ENCODE measurements at regions of chr22 and their contacts with region 1.

Region 1: DNA sequence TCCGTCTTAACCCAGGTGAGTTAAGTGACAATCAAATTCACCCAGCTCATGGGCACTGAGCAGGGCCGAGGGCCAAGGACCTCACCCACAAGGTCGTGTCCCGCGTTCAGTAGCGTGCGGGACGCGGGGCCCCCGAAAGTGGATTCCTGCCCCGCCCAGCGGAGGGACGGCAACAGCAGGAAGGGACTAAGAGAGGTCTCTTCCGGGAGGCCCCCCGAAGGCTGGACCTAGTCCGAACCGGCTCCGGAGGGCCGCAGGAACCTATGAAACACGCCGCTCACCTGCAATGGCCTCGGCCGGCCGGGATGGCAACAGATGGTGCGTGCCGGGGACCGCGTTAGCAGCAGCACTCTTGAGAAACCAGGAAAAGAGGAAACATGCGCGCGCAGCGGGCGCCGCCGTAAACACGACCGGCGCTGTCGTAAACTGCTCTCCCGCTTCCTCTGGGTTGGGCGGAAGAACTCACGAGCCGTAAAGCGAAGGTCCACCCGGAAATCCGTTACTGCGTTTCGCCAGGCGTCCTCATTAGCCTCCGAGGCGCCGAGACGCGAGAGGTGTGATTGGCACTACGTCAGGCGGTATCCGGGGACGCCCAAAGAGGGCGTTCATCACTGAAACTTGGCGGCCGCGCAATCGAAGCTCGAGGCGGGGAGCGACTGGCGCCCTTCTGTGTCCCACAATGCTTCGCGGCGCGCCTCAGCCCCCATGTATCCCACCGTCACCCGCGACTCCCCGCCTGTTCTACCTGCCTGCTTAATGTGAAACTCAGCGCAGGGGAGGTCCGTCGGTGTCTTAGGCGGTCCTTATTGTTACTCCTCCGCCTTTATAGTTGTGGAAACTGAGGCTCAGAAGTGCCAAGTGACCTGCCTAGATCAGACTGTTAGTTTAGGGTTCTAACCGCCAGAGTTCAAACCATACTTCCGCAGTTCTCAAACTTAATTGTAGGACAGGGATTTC is at the start of gene EIF3D:
- DNase-seq: peak; percentile 98 to 99
- ATAC-seq: peak; percentile 93 to 94 (median 94)
- H3K4me3 ChIP-seq: peak within 1 kb of the TSS; percentile 96
- H3K27ac ChIP-seq: peak within 1 kb of the TSS; percentile 95
- H3K4me1 ChIP-seq: peaks cover 17% of the 10 kb centered on the region
- H3K27me3 ChIP-seq: no peaks in the 10 kb centered on the region
- CTCF ChIP-seq: no peak
- total RNA-seq, gene EIF3D: 102 to 125 (median 116) TPM

Region 2: DNA sequence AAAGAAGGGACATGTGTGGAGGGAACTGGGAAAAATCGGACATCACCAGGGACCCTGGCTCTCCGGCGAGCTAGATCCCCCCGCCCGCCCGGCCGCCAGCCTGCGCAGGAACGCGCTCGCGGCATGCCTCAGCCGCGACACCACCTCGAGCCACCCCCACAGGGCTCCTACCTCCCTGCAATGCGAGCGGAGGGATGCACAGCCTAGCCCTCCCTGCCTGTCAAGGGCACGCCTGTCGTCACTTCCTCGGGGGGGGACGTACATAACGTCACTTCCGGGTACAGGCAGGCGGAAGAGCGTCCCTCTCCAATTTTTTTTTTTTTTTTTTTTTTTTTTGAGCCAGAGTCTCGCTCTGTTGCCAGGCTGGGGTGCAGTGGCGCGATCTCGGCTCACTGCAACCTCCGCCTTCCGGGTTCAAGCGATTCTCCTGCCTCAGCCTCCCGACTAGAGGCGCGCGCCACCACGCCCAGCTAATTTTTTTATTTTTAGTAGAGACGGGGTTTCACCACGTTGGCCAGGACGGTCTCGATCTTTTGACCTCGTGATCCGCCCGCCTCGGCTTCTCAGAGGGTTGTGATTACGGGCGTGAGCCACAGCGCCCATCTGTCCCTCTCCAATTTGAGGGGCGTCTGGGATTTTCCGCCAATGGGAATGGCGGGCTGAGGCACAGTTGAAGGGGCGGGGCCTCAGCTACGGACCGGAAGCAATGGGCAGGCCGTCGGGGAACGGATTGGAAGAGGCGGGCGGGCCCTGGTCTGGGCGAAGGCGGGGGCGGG is 47.5 kb before region 1 on chr22 and contains the start of gene TXN2:
- intact Hi-C with region 1: loop called in 1 of 2 experiments (anchors 2 kb)
- DNase-seq: peak; percentile 98 to 99
- ATAC-seq: peak; percentile 93 to 95 (median 94)
- H3K4me3 ChIP-seq: peak within 1 kb of the TSS; percentile 92
- H3K27ac ChIP-seq: peak within 1 kb of the TSS; percentile 97
- H3K4me1 ChIP-seq: peaks cover 15% of the 10 kb centered on the region
- H3K27me3 ChIP-seq: no peaks in the 10 kb centered on the region
- CTCF ChIP-seq: no peak
- total RNA-seq, gene TXN2: 83.9 to 146 (median 112) TPM

Region 3: GRCh38 chr22:36684841-36685240 is 155.8 kb after region 1 on chr22:
- intact Hi-C with region 1: no loop called
- DNase-seq: no peak
- ATAC-seq: no peak
- H3K4me3 ChIP-seq: no peak overlapping the region
- H3K27ac ChIP-seq: no peak overlapping the region
- H3K4me1 ChIP-seq: no peaks in the 10 kb centered on the region
- H3K27me3 ChIP-seq: peaks cover 0 to 65% (median 10%) of the 10 kb centered on the region in 3 donors
- CTCF ChIP-seq: no peak